ENCODE measurements at regions of chr12 and their contacts with region 1.

Region 1: GRCh38 chr12:71780237-71780822 is 25.7 kb downstream of the RAB21 start:
- DNase-seq: peak; percentile 55
- H3K4me3 Mint-ChIP-seq: no peak overlapping the region
- H3K27ac Mint-ChIP-seq: peak overlapping the region; percentile 31
- H3K4me1 Mint-ChIP-seq: peaks cover 4% of the 10 kb centered on the region
- H3K27me3 Mint-ChIP-seq: no peaks in the 10 kb centered on the region

Region 2: GRCh38 chr12:71754461-71755145 is 25.7 kb before region 1 on chr12 and contains the start of gene RAB21:
- CTCF ChIA-PET with region 1: interaction called, 10 read pairs
- POLR2A ChIA-PET with region 1: no interaction called
- DNase-seq: peak; percentile 99
- H3K4me3 Mint-ChIP-seq: peak within 1 kb of the TSS; percentile 96
- H3K27ac Mint-ChIP-seq: peak within 1 kb of the TSS; percentile 97
- H3K4me1 Mint-ChIP-seq: peaks cover 32% of the 10 kb centered on the region
- H3K27me3 Mint-ChIP-seq: peaks cover 22% of the 10 kb centered on the region
- total RNA-seq, gene RAB21: 65.5 to 81.7 TPM